ENCODE measurements at regions of chr22 and their contacts with region 1.

Region 1: DNA sequence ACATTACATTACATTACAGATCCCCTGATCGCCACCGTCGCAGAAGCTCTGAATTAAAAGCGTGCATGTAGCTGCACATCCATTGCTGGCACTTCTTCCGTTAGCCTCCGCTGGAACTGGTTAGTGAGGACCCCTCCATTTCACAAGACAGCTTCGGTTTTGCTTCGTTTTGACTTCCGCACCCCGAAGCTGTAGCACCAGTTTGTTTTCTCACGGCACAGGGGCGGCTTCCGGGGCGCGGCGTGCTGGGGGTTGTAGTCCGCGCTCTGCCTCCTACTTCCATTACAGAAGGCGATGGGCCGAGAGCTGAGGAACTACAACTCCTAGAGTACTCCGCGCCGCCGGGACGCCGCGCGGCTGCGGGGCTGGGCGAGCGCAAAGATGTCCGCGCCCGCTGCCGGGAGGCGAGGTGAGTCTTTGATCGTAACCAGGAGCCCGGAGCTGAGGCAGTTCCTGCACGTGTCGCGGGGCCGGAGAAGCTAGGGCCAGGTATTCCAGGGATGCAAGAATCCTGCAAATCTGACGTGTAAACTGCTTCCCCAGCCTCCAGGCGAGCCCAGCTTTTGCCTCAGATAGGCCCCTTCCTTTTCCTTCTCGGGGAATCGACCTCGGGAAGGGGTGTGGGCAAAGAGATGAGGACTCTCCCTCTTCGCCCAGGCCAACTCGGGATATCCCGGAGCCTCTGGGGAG is at the start of gene PEX26:
- DNase-seq: peak; percentile 96
- ATAC-seq: peak; percentile 99
- H3K4me3 ChIP-seq: peak within 1 kb of the TSS; percentile 93
- H3K27ac ChIP-seq: peak within 1 kb of the TSS; percentile 91
- H3K4me1 ChIP-seq: peaks cover 23% of the 10 kb centered on the region
- H3K27me3 ChIP-seq: no peaks in the 10 kb centered on the region
- CTCF ChIP-seq: no peak
- total RNA-seq, gene PEX26: 35.5 TPM

Region 2: DNA sequence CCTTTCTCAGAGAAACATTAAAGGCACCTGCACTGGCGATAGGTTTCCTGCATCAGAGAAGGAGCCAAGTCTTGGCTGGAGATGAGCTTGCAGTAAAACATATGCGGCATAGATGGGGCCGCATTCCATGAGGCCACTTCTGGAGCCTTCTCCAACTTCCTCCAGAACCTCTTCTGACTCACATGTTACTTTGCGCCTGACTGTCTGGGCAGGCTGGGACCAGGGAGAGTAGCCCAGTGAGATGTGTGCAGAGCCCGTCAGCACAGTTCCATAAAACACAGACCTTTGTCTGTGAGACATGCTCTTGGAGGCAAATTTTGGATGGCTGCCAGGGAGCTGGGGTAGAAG is 248.1 kb before region 1 on chr22:
- intact Hi-C with region 1: loop called (anchors 5 kb)
- DNase-seq: no peak
- ATAC-seq: no peak
- H3K4me3 ChIP-seq: no peak overlapping the region
- H3K27ac ChIP-seq: no peak overlapping the region
- H3K4me1 ChIP-seq: peaks cover 3% of the 10 kb centered on the region
- H3K27me3 ChIP-seq: no peaks in the 10 kb centered on the region
- CTCF ChIP-seq: no peak

Region 3: DNA sequence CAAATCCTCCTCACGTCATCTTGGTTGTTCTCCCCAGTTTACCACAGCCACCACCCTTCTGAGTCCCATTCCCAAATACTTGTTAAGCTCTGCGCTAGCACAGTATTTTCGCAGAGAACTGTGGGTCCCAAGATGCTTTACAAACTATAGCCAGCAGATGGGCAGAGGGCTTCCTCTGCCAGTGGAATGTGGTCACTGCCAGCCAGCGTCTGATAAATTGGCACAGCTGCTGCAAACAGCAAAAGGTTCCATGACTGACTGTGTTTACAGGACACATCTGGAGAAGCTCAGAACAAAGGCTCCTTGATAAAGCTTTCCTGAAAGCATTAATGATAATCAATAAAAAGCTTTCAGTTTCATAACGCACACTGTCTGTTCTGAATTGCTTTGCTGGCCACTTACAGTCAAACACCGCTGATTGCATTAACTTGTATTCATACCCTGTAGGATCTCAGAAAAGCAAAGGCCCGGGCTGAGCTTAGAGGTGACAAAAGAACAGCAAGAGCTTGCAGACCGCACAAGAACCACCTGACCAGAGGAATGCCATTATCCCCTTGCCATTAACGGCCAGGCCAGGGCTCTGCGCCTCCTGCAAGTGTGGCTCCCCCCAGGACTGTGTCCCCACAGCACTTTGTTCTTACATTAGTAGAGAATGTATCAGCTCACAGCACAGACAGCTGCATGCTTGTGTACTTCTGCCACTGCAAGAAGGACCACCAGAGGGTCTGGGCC is 174.1 kb before region 1 on chr22:
- intact Hi-C with region 1: loop called (anchors 10 kb)
- DNase-seq: no peak
- ATAC-seq: no peak
- H3K4me3 ChIP-seq: no peak overlapping the region
- H3K27ac ChIP-seq: no peak overlapping the region
- H3K4me1 ChIP-seq: no peaks in the 10 kb centered on the region
- H3K27me3 ChIP-seq: no peaks in the 10 kb centered on the region
- CTCF ChIP-seq: no peak

Region 4: GRCh38 chr22:17980638-17981051 is 97.1 kb before region 1 on chr22:
- intact Hi-C with region 1: loop called (anchors 10 kb)
- DNase-seq: peak; percentile 70
- ATAC-seq: peak; percentile 74
- H3K4me3 ChIP-seq: peak overlapping the region; percentile 14
- H3K27ac ChIP-seq: peak overlapping the region; percentile 24
- H3K4me1 ChIP-seq: peaks cover 26% of the 10 kb centered on the region
- H3K27me3 ChIP-seq: no peaks in the 10 kb centered on the region
- CTCF ChIP-seq: no peak